ENCODE measurements at regions of chr10 and their contacts with region 1.

Region 1: GRCh38 chr10:109411917-109412316 is 511.4 kb downstream of the XPNPEP1 start:
- DNase-seq: no peak
- ATAC-seq: no peak
- H3K4me3 ChIP-seq: no peak overlapping the region
- H3K27ac ChIP-seq: no peak overlapping the region
- H3K4me1 ChIP-seq: no peaks in the 10 kb centered on the region
- H3K27me3 ChIP-seq: no peaks in the 10 kb centered on the region
- CTCF ChIP-seq: 0 out of 2 replicates have a peak, but pooled peaks have one; percentile 1
- POLR2A ChIP-seq: no peak
- RAD21 ChIP-seq: no peak

Region 2: GRCh38 chr10:109040622-109041021 is 371.3 kb before region 1 on chr10:
- CTCF ChIA-PET with region 1: no interaction called
- POLR2A ChIA-PET with region 1: no interaction called
- dilution Hi-C with region 1: no loop called
- in situ Hi-C with region 1: no loop called
- intact Hi-C with region 1: no loop called
- DNase-seq: no peak
- ATAC-seq: no peak
- H3K4me3 ChIP-seq: no peak overlapping the region
- H3K27ac ChIP-seq: no peak overlapping the region
- H3K4me1 ChIP-seq: no peaks in the 10 kb centered on the region
- H3K27me3 ChIP-seq: no peaks in the 10 kb centered on the region
- CTCF ChIP-seq: no peak
- POLR2A ChIP-seq: no peak
- RAD21 ChIP-seq: no peak

Region 3: DNA sequence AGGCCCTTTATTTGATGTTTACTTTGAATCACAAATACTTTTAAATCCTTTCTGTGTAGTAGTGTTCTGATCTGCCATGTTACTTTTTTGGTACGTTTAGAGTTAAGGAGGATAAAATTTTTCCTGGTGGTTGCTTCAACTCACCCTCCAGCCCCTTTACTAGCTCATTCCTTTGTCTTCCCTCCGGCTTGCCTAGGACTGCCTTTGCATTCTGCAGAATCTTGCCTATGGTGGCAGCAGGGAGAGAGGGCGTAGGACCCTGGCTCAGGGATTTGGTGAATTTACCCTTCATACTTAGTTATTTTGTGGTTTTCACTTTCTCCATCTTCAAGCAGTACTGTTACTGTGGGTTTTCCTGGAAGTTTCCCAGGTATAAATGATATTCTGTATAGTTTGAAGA is 322.1 kb before region 1 on chr10:
- CTCF ChIA-PET with region 1: no interaction called
- POLR2A ChIA-PET with region 1: no interaction called
- dilution Hi-C with region 1: no loop called
- in situ Hi-C with region 1: no loop called
- intact Hi-C with region 1: no loop called
- DNase-seq: no peak
- ATAC-seq: no peak
- H3K4me3 ChIP-seq: no peak overlapping the region
- H3K27ac ChIP-seq: no peak overlapping the region
- H3K4me1 ChIP-seq: no peaks in the 10 kb centered on the region
- H3K27me3 ChIP-seq: no peaks in the 10 kb centered on the region
- CTCF ChIP-seq: no peak
- POLR2A ChIP-seq: no peak
- RAD21 ChIP-seq: no peak

Region 4: DNA sequence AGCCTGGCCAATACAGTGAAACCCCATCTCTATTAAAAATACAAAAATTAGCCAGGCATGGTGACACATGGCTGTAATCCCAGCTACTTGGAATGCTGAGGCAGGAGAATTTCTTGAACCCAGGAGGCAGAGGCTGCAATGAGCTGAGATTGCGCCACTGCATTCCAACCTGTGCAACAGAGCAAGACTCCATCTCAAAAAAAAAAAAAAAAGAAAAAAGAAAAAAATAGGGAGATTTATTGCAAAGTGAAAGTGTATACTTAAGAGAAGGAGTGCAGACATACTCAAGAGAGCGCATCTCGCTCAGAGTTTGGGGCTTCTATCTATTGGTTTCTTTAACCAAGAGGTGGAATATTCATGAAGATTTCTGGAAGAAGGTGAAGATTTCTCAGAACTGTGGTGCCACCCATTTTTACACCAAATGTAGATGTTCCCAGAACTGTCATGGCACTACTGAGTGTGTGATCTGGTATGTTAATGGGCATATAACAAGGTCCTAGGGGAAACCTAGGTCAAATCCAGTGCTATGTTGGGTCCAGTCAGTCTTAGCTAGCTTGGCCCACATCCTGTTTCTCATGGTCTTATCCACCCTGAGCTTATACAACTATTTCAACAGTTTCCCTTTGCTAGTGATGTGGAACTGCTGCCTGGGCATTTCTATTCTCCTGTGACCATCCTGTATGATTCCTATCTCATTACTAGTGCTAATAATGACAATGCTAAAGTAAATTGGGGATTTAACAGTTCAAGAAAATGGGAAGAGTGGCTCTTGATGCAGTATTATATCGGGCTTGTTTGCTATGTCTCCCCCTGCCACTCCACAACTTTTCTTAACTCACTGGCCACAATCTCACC is 196.8 kb before region 1 on chr10:
- CTCF ChIA-PET with region 1: interaction called, 11 read pairs
- POLR2A ChIA-PET with region 1: no interaction called
- dilution Hi-C with region 1: no loop called
- in situ Hi-C with region 1: no loop called
- intact Hi-C with region 1: no loop called
- DNase-seq: no peak
- ATAC-seq: no peak
- H3K4me3 ChIP-seq: no peak overlapping the region
- H3K27ac ChIP-seq: no peak overlapping the region
- H3K4me1 ChIP-seq: no peaks in the 10 kb centered on the region
- H3K27me3 ChIP-seq: no peaks in the 10 kb centered on the region
- CTCF ChIP-seq: no peak
- POLR2A ChIP-seq: no peak
- RAD21 ChIP-seq: no peak

Region 5: GRCh38 chr10:109348324-109348723 is 63.6 kb before region 1 on chr10:
- CTCF ChIA-PET with region 1: no interaction called
- POLR2A ChIA-PET with region 1: no interaction called
- dilution Hi-C with region 1: no loop called
- in situ Hi-C with region 1: no loop called
- intact Hi-C with region 1: loop called (anchors 1 kb)
- DNase-seq: peak; percentile 6
- ATAC-seq: peak; percentile 11; the same call in 1 of the 2 replicates
- H3K4me3 ChIP-seq: no peak overlapping the region
- H3K27ac ChIP-seq: no peak overlapping the region
- H3K4me1 ChIP-seq: no peaks in the 10 kb centered on the region
- H3K27me3 ChIP-seq: no peaks in the 10 kb centered on the region
- CTCF ChIP-seq: no peak
- POLR2A ChIP-seq: no peak
- RAD21 ChIP-seq: no peak

Measured in IMR-90 (cell line).